Endothelial cell of umbilical vein (primary cell): ENCODE measurements at regions of chr1 and their contacts with region 1.

Region 1: GRCh38 chr1:44631647-44632539 is 42.4 kb downstream of the TMEM53 start:
- DNase-seq: peak; percentile 89
- H3K4me3 ChIP-seq: peak overlapping the region; percentile 55 to 81 (median 78)
- H3K27ac ChIP-seq: peak overlapping the region; percentile 78
- H3K4me1 ChIP-seq: peaks cover 9% of the 10 kb centered on the region
- H3K27me3 ChIP-seq: no peaks in the 10 kb centered on the region
- CTCF ChIP-seq: no peak
- POLR2A ChIP-seq: peak; percentile 91

Region 2: GRCh38 chr1:44437107-44437716 is 194.7 kb before region 1 on chr1:
- CTCF ChIA-PET with region 1: no interaction called
- POLR2A ChIA-PET with region 1: no interaction called
- dilution Hi-C with region 1: no loop called
- intact Hi-C with region 1: no loop called
- DNase-seq: no peak
- H3K4me3 ChIP-seq: no peak overlapping the region
- H3K27ac ChIP-seq: no peak overlapping the region
- H3K4me1 ChIP-seq: peaks cover 7% of the 10 kb centered on the region
- H3K27me3 ChIP-seq: peaks cover 6 to 7% of the 10 kb centered on the region in 2 experiments
- CTCF ChIP-seq: no peak
- POLR2A ChIP-seq: no peak

Region 3: GRCh38 chr1:44616991-44617702 is 14.7 kb before region 1 on chr1:
- CTCF ChIA-PET with region 1: interaction called, 3 read pairs
- POLR2A ChIA-PET with region 1: interaction called, 11 read pairs
- dilution Hi-C with region 1: no loop called
- intact Hi-C with region 1: no loop called
- DNase-seq: no peak
- H3K4me3 ChIP-seq: peak overlapping the region in 1 of 3 experiments; percentile 10
- H3K27ac ChIP-seq: no peak overlapping the region
- H3K4me1 ChIP-seq: no peaks in the 10 kb centered on the region
- H3K27me3 ChIP-seq: peaks cover 36 to 47% of the 10 kb centered on the region in 2 experiments
- CTCF ChIP-seq: no peak
- POLR2A ChIP-seq: no peak